ENCODE measurements at regions of chr15 and their contacts with region 1.

Region 1: GRCh38 chr15:58070801-58071418 is 5.4 kb upstream of the ALDH1A2 start:
- DNase-seq: peak; percentile 53 to 55
- ATAC-seq: peak in 1 of 8 donors; percentile 51
- H3K4me3 ChIP-seq: no peak overlapping the region
- H3K27ac ChIP-seq: no peak overlapping the region
- H3K4me1 ChIP-seq: peaks cover 0 to 9% (median 4%) of the 10 kb centered on the region in 9 donors
- H3K27me3 ChIP-seq: peaks cover 0 to 81% (median 15%) of the 10 kb centered on the region in 7 donors
- CTCF ChIP-seq: peak; percentile 86 to 98 (median 95)

Region 2: GRCh38 chr15:57667171-57667849 is 403.6 kb before region 1 on chr15:
- intact Hi-C with region 1: loop called in 1 of 10 experiments (anchors 5 kb)
- DNase-seq: no peak
- ATAC-seq: peak; percentile 41 to 85 (median 75)
- H3K4me3 ChIP-seq: peak overlapping the region in 1 of 10 donors; percentile 2
- H3K27ac ChIP-seq: peak overlapping the region in 5 of 10 donors; percentile 10 to 32 (median 15)
- H3K4me1 ChIP-seq: peaks cover 0 to 35% (median 20%) of the 10 kb centered on the region in 9 donors
- H3K27me3 ChIP-seq: no peaks in the 10 kb centered on the region
- CTCF ChIP-seq: peak in 8 of 9 donors; percentile 40 to 70 (median 52)

Region 3: DNA sequence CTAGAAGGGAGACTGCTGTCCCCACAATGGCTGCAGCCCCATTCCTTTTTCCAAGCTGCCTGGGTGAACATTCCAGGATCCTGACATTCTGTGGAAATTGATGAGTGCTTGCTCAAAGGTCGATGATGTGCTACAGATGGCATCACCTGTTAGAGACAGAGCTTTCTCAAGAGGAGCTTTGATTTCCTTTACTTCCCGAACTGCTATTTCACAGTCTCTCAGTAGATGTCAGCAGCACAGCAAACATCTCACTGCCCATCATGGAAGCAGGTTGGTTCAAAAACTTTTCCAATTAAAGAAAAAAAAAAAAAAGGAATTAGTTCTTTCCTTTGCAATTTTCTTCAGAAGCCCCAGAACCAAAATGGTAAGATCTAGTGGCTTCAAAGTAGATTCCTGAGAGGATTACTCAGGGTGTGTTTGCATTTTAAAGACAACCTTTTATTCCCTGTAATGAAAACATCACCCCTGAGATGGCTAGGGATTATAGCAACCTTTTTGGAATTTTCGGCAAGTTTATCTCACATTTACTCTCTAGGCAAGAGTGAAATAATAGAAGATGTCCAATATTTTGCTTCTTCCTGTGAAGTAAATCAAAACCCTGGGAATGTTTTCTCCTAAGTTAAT is 319.6 kb before region 1 on chr15:
- intact Hi-C with region 1: loop called (anchors 2 to 5 kb)
- DNase-seq: no peak
- ATAC-seq: peak in 6 of 8 donors; percentile 35 to 61 (median 51)
- H3K4me3 ChIP-seq: no peak overlapping the region
- H3K27ac ChIP-seq: no peak overlapping the region
- H3K4me1 ChIP-seq: peaks cover 0 to 13% (median 0%) of the 10 kb centered on the region in 9 donors
- H3K27me3 ChIP-seq: no peaks in the 10 kb centered on the region
- CTCF ChIP-seq: peak in 8 of 9 donors; percentile 48 to 77 (median 66)

Region 4: DNA sequence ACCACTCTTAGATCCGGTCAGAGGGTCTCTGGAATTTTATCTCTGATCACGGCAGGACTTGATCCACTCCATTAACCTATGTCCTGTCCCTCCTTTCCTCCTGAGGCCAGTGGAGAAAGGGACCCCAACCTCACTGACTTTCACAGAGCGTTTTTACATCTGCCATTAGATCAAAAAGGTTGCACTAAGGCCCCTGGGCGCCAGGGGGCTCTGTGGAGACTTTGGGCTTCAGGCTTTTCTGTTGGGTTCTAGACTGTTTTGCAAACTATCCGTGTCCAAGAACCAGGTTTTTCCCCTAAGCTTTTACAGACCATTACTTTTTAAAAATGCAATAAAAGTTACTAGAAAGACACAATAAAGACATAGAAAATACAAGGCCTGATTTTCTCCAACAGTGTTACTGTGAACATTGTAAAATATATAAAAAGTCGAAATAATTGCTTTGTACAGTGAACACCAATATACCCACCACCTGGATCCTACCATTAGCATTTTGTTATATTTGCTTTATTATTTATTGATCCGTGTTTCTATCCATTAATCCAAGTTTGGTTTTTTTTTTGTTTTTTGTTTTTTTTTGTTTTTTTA is 204.7 kb before region 1 on chr15:
- intact Hi-C with region 1: loop called in 9 of 10 experiments (anchors 1 to 10 kb)
- DNase-seq: peak; percentile 46 to 62
- ATAC-seq: peak in 3 of 8 donors; percentile 52 to 55 (median 54)
- H3K4me3 ChIP-seq: no peak overlapping the region
- H3K27ac ChIP-seq: no peak overlapping the region
- H3K4me1 ChIP-seq: no peaks in the 10 kb centered on the region
- H3K27me3 ChIP-seq: peaks cover 0 to 21% (median 3%) of the 10 kb centered on the region in 7 donors
- CTCF ChIP-seq: peak; percentile 67 to 84 (median 79)

Region 5: GRCh38 chr15:58182460-58183163 is 111.7 kb after region 1 on chr15:
- intact Hi-C with region 1: loop called in 4 of 10 experiments (anchors 5 to 10 kb)
- DNase-seq: peak; percentile 14 to 41
- ATAC-seq: peak; percentile 63 to 93 (median 88)
- H3K4me3 ChIP-seq: no peak overlapping the region
- H3K27ac ChIP-seq: no peak overlapping the region
- H3K4me1 ChIP-seq: no peaks in the 10 kb centered on the region
- H3K27me3 ChIP-seq: peaks cover 0 to 13% (median 0%) of the 10 kb centered on the region in 7 donors
- CTCF ChIP-seq: peak; percentile 49 to 87 (median 78)

Region 6: GRCh38 chr15:58401991-58402649 is 331.2 kb after region 1 on chr15:
- intact Hi-C with region 1: no loop called
- DNase-seq: no peak
- ATAC-seq: peak in 6 of 8 donors; percentile 34 to 65 (median 56)
- H3K4me3 ChIP-seq: no peak overlapping the region
- H3K27ac ChIP-seq: no peak overlapping the region
- H3K4me1 ChIP-seq: peaks cover 0 to 9% (median 5%) of the 10 kb centered on the region in 9 donors
- H3K27me3 ChIP-seq: no peaks in the 10 kb centered on the region
- CTCF ChIP-seq: no peak

Measured in heart right ventricle (tissue), 16 donors.